Calu3 (cell line): ENCODE measurements at regions of chr15 and their contacts with region 1.

Region 1: DNA sequence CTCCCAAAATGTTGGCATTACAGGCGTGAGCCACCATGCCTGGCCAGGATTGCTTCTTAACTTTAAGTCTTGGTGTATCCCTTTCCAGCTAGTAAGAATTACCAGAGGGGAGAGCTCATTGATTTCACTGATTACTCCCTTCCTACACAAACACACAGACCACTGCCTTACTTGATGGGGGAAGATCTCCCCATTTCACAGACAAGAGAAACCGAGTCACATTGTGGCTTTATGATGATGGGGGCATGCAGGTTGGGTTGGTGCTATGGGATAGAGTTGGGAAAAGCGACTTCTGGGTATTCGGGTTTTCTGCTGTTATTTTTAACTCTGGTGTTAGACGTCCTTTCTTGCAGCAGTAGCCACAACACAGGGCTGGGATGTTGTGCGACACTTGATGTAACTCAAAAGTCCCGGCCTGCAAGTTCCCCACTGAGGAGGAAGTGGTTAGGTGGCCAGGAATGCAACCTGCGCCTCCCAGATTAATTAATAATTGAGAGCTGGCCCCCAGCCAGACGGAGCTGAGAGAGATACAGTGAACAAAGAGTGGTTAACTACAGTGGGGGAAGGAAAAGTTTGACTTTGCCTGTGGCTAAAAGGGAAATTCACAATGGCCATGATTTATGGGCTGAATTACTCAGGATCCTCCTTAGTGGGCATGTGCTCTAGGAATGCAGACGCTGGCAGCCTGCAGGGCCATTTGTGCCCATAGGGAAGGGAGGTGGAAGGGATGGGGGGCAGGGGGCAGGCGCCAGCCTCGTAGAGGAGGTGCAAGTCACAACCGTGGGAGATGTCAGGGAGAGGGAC is 63.6 kb downstream of the SMAD6 start:
- DNase-seq: peak; percentile 99
- H3K4me3 Mint-ChIP-seq: peak overlapping the region; percentile 36
- H3K27ac Mint-ChIP-seq: peak overlapping the region; percentile 96
- H3K4me1 Mint-ChIP-seq: peaks cover 97% of the 10 kb centered on the region
- H3K27me3 Mint-ChIP-seq: no peaks in the 10 kb centered on the region
- CTCF ChIP-seq: no peak

Region 2: GRCh38 chr15:66603301-66604179 is 162.1 kb before region 1 on chr15:
- CTCF ChIA-PET with region 1: interaction called, 11 read pairs
- intact Hi-C with region 1: loop called (anchors 5 kb)
- DNase-seq: peak; percentile 82
- H3K4me3 Mint-ChIP-seq: no peak overlapping the region
- H3K27ac Mint-ChIP-seq: no peak overlapping the region
- H3K4me1 Mint-ChIP-seq: no peaks in the 10 kb centered on the region
- H3K27me3 Mint-ChIP-seq: peaks cover 34% of the 10 kb centered on the region
- CTCF ChIP-seq: peak; percentile 90

Region 3: DNA sequence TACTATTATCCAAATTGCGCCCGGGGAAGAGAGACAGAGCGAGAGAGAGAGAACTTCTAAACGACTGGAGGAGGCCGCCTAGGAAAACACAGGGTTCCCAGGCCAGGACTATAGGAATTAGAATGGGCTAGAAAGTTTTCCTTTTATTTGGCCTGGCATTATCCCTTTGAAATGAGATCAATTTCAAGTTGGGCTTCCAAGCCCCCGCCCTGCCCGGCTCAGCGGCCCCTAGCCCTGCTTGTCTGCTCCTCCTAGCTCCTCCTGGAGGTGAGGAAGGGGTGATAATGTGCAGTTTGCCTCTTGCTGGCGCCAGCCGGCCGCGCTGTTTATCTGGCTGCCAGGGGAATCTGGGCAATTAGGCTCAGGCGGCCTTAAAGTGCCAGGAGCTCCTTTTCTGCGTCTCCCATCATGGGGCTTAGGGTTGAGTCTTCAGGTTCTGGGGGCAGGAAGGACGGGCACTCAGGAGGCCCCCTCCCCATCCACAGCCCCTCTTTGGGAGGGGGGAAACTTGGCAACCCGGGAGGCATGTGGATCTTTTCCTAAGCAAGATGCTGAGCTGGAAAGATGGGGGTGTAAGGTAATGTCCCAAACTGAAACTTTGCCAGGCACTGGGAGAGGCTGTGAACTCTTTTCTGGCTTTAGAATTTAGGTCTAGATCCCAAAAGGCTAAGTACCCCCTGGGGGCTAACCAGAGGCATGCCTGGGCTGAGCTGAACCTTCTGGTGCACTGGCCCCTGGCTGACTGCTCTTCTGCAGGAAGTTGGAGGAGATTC is 58.2 kb before region 1 on chr15:
- CTCF ChIA-PET with region 1: interaction called, 35 read pairs
- intact Hi-C with region 1: loop called (anchors 2 kb)
- DNase-seq: peak; percentile 60
- H3K4me3 Mint-ChIP-seq: peak overlapping the region; percentile 98
- H3K27ac Mint-ChIP-seq: no peak overlapping the region
- H3K4me1 Mint-ChIP-seq: peaks cover 21% of the 10 kb centered on the region
- H3K27me3 Mint-ChIP-seq: no peaks in the 10 kb centered on the region
- CTCF ChIP-seq: no peak

Region 4: DNA sequence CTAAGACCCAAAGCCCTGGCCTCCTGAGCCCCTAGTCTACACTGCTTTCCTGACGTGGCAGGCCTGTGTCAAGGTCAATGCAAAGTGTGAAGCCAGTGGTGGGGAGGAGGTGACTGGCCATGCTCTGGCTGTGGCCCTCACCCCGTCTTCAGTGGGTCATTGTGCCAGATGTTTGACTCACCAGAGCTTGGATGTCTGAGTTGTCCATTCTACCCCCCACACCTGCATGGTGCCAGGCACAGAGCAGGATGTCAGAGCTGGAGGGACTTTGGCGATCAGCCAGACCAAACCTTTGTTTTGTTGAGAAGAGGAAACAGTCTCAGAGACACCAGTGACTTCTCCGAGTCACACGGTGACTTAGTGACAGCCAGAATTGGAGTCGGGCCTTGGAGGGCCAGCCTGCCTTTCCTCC is 14.1 kb before region 1 on chr15:
- CTCF ChIA-PET with region 1: interaction called, 9 read pairs
- intact Hi-C with region 1: loop called (anchors 2 kb)
- DNase-seq: peak; percentile 86
- H3K4me3 Mint-ChIP-seq: peak overlapping the region; percentile 35
- H3K27ac Mint-ChIP-seq: peak overlapping the region; percentile 88
- H3K4me1 Mint-ChIP-seq: peaks cover 79% of the 10 kb centered on the region
- H3K27me3 Mint-ChIP-seq: no peaks in the 10 kb centered on the region
- CTCF ChIP-seq: no peak

Region 5: GRCh38 chr15:66815322-66815721 is 49.6 kb after region 1 on chr15:
- CTCF ChIA-PET with region 1: no interaction called
- intact Hi-C with region 1: no loop called
- DNase-seq: no peak
- H3K4me3 Mint-ChIP-seq: no peak overlapping the region
- H3K27ac Mint-ChIP-seq: no peak overlapping the region
- H3K4me1 Mint-ChIP-seq: peaks cover 24% of the 10 kb centered on the region
- H3K27me3 Mint-ChIP-seq: no peaks in the 10 kb centered on the region
- CTCF ChIP-seq: no peak

Region 6: GRCh38 chr15:67134067-67134838 is 368.6 kb after region 1 on chr15:
- CTCF ChIA-PET with region 1: no interaction called
- intact Hi-C with region 1: no loop called
- DNase-seq: no peak
- H3K4me3 Mint-ChIP-seq: peak overlapping the region; percentile 35
- H3K27ac Mint-ChIP-seq: peak overlapping the region; percentile 66
- H3K4me1 Mint-ChIP-seq: peaks cover 74% of the 10 kb centered on the region
- H3K27me3 Mint-ChIP-seq: no peaks in the 10 kb centered on the region
- CTCF ChIP-seq: no peak

Region 7: DNA sequence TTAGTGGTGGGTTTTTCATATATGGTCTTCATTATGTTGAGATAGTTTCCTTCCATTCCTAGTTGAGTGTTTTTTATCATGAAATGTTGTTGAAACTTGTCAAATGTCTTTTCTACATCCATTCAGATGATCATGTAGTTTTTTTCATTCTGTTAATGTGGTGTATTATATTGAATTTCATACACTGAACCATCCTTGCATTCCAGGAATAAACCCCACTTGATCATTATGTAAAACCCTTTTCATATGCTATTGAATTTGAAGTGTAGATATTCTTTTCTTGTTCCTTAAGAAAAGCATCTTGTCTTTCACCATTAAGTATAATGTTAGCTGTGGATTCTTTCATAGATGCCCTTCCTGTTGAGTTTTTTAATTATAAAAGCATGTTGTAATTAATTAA is 1331.3 kb after region 1 on chr15:
- CTCF ChIA-PET with region 1: no interaction called
- intact Hi-C with region 1: no loop called
- DNase-seq: no peak
- H3K4me3 Mint-ChIP-seq: no peak overlapping the region
- H3K27ac Mint-ChIP-seq: no peak overlapping the region
- H3K4me1 Mint-ChIP-seq: peaks cover 10% of the 10 kb centered on the region
- H3K27me3 Mint-ChIP-seq: no peaks in the 10 kb centered on the region
- CTCF ChIP-seq: no peak